ENCODE measurements at regions of chr3 and their contacts with region 1.

Region 1: GRCh38 chr3:57974796-57975388 is 33.3 kb upstream of the FLNB start:
- DNase-seq: peak; percentile 98
- ATAC-seq: peak; percentile 36
- H3K4me3 ChIP-seq: no peak overlapping the region
- H3K27ac ChIP-seq: peak overlapping the region; percentile 95
- H3K4me1 ChIP-seq: peaks cover 82% of the 10 kb centered on the region
- H3K27me3 ChIP-seq: no peaks in the 10 kb centered on the region
- CTCF ChIP-seq: no peak

Region 2: DNA sequence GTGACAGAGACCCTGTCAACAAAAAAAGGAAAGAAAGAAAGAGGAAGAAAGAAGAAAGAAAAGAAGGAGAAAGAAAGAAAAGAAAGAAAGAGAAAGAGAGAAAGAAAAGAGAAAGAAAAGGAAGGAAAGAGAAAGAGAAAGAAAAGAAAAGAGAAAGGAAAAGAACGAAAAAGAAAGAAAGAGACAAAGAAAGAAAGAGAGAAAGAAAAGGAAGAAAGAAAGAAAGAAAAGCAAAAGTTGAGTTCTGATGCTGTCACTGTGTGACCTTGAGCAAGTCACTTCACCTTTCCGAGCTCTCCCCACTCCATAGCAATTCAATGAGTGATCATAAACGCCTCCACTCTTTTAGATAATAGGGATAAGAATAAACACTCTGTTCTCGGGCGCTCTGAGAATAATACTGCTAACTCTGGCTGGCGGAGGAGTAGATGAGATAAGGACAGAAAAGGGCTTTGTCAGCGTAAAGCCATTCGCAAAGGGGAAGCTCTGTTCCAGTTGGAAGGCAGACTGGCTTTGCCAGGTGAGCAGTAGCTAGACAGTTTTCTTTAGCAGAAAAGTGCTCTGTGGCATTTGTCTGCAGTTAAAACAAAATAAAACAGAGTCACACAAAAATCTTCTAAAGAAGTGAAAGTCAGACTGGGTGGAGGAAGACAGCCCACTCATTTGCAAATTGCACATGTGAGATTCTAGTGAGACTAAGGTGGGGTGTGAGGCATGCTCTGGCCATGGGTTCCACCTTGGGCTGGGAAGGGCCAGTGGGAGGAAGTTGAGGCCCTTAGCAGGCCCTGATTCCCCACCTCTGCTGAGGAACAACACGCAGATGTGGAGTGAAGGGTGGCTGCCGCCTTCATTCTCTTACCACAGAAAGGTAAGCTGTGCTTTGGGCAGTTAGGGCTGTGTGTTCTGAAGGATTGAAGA is 23.7 kb after region 1 on chr3:
- CTCF ChIA-PET with region 1: no interaction called
- POLR2A ChIA-PET with region 1: interaction called, 13 read pairs
- intact Hi-C with region 1: loop called (anchors 1 kb)
- DNase-seq: peak; percentile 45
- ATAC-seq: peak; percentile 5
- H3K4me3 ChIP-seq: no peak overlapping the region
- H3K27ac ChIP-seq: peak overlapping the region; percentile 92
- H3K4me1 ChIP-seq: peaks cover 45% of the 10 kb centered on the region
- H3K27me3 ChIP-seq: no peaks in the 10 kb centered on the region
- CTCF ChIP-seq: no peak

Region 3: DNA sequence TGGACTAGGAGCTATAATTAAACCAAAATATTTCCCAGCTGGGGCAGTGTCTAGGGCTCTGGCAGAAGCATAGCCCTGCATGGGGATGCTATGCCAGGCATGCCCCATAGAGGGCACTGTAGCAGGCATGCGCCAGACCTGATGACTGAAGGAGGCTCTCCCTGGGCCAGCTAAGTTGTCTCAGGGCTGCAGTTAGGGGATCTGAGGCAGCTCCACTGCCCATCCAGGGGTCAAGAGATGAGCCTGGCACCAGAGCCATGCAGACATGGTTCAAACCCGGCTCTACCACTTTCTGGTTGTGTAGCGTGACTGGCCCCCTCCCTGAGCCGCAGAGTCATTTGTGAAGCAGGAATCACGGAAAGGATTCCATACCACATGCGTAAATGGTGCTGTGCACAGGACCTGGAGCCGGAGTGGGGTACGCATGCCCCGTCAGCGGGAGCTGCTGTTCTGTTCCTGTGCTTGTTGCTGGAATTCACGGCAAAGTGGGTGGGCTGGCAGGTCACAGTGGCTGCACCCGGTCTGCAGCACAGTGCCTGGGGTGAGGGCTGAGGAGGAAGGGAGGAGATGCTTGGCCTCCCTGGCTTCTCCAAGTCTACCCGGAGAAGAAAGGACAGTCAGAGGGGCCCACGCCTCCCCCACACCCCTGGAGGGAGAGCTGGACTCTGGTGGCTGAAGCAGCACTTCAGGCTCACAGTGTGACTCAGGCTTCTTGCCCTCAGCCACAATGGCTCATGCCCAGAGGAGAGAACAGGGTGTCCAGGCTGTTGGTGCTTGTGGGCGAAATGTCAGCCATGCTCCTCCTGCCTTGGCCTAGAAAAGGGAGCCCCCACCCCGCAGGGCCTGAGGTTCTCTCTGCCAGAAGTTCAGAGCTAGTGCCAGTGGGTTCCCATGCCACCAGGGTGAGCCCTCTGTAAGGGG is 192.8 kb after region 1 on chr3:
- CTCF ChIA-PET with region 1: no interaction called
- POLR2A ChIA-PET with region 1: no interaction called
- intact Hi-C with region 1: loop called (anchors 10 kb)
- DNase-seq: peak; percentile 76
- ATAC-seq: peak; percentile 29
- H3K4me3 ChIP-seq: no peak overlapping the region
- H3K27ac ChIP-seq: no peak overlapping the region
- H3K4me1 ChIP-seq: peaks cover 27% of the 10 kb centered on the region
- H3K27me3 ChIP-seq: no peaks in the 10 kb centered on the region
- CTCF ChIP-seq: peak; percentile 93

Measured in PC-3 (cell line).